ENCODE measurements at regions of chr1 and their contacts with region 1.

Region 1: DNA sequence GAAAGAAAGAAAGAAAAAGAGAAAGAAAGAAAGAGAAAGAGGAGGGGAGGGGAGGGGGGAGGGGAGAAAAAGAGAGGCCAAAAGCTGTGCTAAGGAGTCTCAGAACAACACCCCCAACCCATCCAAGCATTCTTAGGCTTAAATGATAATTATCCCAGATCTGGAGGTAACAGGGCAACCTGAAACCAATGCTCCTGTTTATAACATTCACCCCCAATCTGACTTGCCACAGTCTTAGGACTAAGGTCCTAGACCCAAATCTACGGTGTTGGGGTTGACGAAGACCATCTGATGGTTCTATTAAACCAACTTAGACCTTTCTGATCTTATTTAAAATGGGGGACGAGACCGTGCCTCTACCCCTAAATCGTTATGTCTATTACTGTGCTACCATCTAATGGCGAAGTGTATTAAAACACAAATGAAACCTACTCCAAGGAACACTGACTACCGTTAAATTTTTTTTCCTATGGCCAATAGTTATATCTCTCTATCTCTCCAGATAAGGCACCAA is 119.3 kb upstream of the CDC42BPA start:
- DNase-seq: no peak
- H3K4me3 ChIP-seq: peak overlapping the region; percentile 10
- H3K27ac ChIP-seq: no peak overlapping the region
- H3K4me1 ChIP-seq: no peaks in the 10 kb centered on the region
- H3K27me3 ChIP-seq: no peaks in the 10 kb centered on the region
- CTCF ChIP-seq: peak; percentile 15

Region 2: DNA sequence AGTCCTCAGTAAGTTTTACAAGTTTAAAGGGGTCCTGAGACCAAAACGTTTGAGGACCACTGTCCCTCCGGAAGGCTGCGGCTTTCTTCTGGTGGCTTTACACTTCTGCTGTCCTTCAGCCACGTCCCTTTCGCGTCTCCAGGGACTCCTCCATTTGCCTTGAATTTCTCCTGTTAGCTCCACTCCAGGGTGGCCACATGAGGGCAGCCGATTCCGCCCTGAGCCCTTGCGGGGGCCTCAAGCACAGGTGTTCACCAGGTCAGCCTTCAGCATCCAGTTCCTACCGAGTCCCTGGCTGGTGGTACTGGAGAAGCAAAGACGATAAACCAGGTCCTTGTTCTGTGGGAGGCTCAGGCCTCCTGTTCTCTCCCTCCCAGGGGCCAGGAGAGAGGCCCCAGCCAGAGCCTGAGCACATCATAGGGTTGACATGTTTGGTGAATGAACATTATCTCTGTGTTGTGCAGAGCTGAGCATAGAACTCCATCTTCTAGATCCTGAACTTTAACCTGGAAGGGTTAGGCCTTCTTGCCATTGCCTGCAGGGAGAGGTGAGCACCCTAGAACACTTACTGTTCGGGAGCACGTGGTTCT is 524.9 kb before region 1 on chr1:
- intact Hi-C with region 1: loop called (anchors 5 kb)
- DNase-seq: peak; percentile 79
- H3K4me3 ChIP-seq: no peak overlapping the region
- H3K27ac ChIP-seq: no peak overlapping the region
- H3K4me1 ChIP-seq: no peaks in the 10 kb centered on the region
- H3K27me3 ChIP-seq: no peaks in the 10 kb centered on the region
- CTCF ChIP-seq: peak; percentile 75

Region 3: GRCh38 chr1:227156520-227156919 is 281.0 kb before region 1 on chr1:
- intact Hi-C with region 1: no loop called
- DNase-seq: no peak
- H3K4me3 ChIP-seq: no peak overlapping the region
- H3K27ac ChIP-seq: no peak overlapping the region
- H3K4me1 ChIP-seq: no peaks in the 10 kb centered on the region
- H3K27me3 ChIP-seq: no peaks in the 10 kb centered on the region
- CTCF ChIP-seq: no peak

Region 4: GRCh38 chr1:227234998-227235405 is 202.6 kb before region 1 on chr1:
- intact Hi-C with region 1: loop called (anchors 2 kb)
- DNase-seq: no peak
- H3K4me3 ChIP-seq: no peak overlapping the region
- H3K27ac ChIP-seq: no peak overlapping the region
- H3K4me1 ChIP-seq: no peaks in the 10 kb centered on the region
- H3K27me3 ChIP-seq: no peaks in the 10 kb centered on the region
- CTCF ChIP-seq: peak; percentile 36

Region 5: GRCh38 chr1:228781161-228781808 is 1343.7 kb after region 1 on chr1:
- intact Hi-C with region 1: no loop called
- DNase-seq: no peak
- H3K4me3 ChIP-seq: no peak overlapping the region
- H3K27ac ChIP-seq: no peak overlapping the region
- H3K4me1 ChIP-seq: peaks cover 14% of the 10 kb centered on the region
- H3K27me3 ChIP-seq: no peaks in the 10 kb centered on the region
- CTCF ChIP-seq: no peak

Measured in colonic mucosa (tissue), 4 donors.